Activated B cell treated with CpG ODN at 0.5 μM for 24 hours (primary cell): ENCODE measurements at regions of chr7 and their contacts with region 1.

Region 1: DNA sequence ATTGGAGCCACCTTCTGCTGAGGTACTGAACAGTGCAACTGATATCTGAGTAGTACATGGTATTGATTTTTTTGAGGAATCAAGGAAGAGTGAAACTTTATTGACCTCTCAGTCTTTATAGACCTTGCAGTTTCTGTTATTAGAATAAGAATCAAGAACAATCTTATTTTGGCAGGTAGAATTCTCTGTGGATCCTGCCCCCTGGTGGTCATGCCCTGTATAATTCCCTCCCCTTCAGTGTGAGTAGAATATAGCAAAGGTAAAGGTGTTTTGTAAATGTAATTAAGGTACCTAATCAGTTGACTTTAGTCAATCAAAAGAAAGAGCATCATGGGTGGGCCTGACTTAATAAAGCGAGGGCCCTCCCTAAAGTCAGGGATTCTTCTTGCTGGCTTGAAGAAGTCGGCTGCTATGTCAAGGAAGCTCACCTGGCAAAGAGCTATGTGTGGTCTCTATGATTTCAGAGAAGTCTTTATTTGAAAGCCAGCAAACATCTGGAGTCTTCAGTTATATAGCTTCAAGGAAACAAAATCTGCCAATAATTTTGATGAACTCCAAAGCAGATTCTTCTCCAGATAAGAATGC is 142.8 kb downstream of the LSM5 start:
- DNase-seq: no peak
- ATAC-seq: no peak
- H3K4me3 Mint-ChIP-seq: no peak overlapping the region
- H3K27ac Mint-ChIP-seq: no peak overlapping the region
- H3K4me1 Mint-ChIP-seq: no peaks in the 10 kb centered on the region
- H3K27me3 Mint-ChIP-seq: no peaks in the 10 kb centered on the region
- CTCF ChIP-seq: no peak

Region 2: DNA sequence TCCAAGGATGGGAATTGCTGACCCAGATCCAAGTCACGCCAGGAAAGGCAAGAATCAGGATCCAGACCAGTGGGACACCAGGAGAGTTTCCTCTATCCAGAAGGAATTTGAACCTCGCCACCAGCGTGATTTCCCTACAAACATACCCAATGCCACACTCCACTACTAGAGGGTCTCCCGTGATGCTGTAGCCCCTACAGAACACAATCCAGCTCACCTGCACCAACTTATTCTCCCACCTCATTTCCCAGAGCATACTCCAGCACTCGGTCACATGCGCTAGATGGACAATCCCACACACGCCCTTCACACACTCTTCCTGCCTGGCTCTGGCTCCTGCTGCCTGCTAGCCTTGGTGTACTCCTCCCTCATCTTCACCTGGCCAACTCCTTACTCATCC is 135.0 kb before region 1 on chr7:
- CTCF ChIA-PET with region 1: interaction called, 4 read pairs
- POLR2A ChIA-PET with region 1: no interaction called
- intact Hi-C with region 1: loop called (anchors 5 kb)
- DNase-seq: no peak
- ATAC-seq: no peak
- H3K4me3 Mint-ChIP-seq: no peak overlapping the region
- H3K27ac Mint-ChIP-seq: no peak overlapping the region
- H3K4me1 Mint-ChIP-seq: no peaks in the 10 kb centered on the region
- H3K27me3 Mint-ChIP-seq: no peaks in the 10 kb centered on the region
- CTCF ChIP-seq: no peak